Activated CD4-positive, alpha-beta T cell treated with anti-CD3 and anti-CD28 coated beads for 36 hours (primary cell): ENCODE measurements at regions of chr17 and their contacts with region 1.

Region 1: DNA sequence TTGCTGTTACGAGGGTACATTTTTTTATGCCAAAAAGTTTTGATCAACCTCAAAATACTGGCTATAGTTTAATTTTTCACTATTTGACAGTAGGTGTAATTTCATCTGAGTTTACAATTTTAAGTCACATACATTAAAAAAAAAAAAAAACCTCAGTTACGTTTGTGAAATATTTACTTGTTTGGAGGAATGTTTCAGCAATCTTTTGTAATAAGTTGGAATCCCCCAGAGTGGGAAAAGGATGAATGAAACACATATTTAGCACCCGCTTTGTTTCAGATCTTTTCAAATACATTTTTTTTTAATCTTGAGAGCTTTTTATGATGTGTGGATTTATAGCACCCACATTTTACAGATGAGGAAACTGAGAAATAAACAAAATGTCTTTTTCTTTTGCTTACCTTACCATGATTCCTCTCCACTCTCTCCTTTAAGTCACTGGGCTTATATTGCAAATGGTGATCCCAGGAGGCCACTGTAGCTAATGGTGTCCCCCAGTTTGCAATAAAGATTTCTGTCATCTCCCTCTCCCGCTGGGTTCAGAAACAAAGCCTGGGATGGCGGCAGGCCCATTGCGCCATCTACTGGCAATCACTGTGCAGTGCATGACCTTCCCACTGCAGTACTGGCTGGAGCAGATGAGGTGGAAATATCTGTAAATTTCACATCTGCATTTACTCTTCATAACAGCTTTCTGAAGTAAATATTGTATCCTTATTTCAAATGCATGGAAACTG is 27.7 kb downstream of the TBC1D3B start:
- DNase-seq: peak; percentile 80
- ATAC-seq: peak; percentile 87
- H3K4me3 Mint-ChIP-seq: no peak overlapping the region
- H3K27ac Mint-ChIP-seq: no peak overlapping the region
- H3K4me1 Mint-ChIP-seq: peaks cover 3% of the 10 kb centered on the region
- H3K27me3 Mint-ChIP-seq: peaks cover 15% of the 10 kb centered on the region

Region 2: DNA sequence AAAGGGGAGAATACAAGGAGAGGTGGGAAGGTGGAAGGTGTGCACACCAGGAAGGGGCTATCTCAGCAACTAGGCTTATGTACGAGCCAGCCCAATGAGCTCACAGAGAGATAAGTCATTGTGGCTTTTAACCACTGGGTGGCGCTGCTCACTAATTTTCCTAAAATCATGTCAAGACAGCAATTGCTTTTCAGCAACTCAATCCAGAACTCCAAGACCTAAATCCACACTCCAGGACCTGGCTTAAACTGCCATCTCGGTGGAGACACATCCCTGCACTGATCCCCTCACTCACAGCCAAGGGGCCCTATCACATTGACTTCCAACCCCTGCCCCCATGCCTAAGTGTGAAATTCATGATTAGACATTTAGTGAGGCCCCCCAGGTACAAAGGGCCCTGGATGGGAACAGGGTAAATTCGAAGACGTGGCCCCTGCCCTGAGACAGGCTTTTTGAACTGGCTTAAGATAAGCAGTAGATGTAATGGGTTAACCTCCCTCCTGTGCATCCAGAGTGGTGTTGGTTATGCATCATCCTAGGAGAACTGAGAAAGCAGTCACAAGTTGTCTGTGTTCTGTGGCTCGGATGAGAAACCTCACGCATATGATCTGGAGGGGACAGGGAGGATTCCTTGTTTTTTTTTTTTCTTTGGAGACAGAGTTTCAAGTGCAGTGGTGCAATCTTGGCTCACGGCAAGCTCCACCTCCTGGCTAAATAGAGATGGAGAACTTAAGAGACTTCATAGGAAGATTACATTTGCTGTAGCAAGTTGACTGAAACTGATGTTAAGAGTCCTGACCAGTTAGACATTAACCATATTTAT is 179.0 kb before region 1 on chr17:
- CTCF ChIA-PET with region 1: interaction called, 173 read pairs
- POLR2A ChIA-PET with region 1: interaction called, 3 read pairs
- intact Hi-C with region 1: loop called (anchors 1 to 2 kb)
- DNase-seq: peak; percentile 86
- ATAC-seq: peak; percentile 79
- H3K4me3 Mint-ChIP-seq: no peak overlapping the region
- H3K27ac Mint-ChIP-seq: no peak overlapping the region
- H3K4me1 Mint-ChIP-seq: no peaks in the 10 kb centered on the region
- H3K27me3 Mint-ChIP-seq: no peaks in the 10 kb centered on the region

Region 3: GRCh38 chr17:35981908-35982330 is 166.8 kb before region 1 on chr17:
- CTCF ChIA-PET with region 1: interaction called, 18 read pairs
- POLR2A ChIA-PET with region 1: no interaction called
- intact Hi-C with region 1: no loop called
- DNase-seq: peak; percentile 17
- ATAC-seq: no peak
- H3K4me3 Mint-ChIP-seq: no peak overlapping the region
- H3K27ac Mint-ChIP-seq: no peak overlapping the region
- H3K4me1 Mint-ChIP-seq: no peaks in the 10 kb centered on the region
- H3K27me3 Mint-ChIP-seq: peaks cover 8% of the 10 kb centered on the region

Region 4: DNA sequence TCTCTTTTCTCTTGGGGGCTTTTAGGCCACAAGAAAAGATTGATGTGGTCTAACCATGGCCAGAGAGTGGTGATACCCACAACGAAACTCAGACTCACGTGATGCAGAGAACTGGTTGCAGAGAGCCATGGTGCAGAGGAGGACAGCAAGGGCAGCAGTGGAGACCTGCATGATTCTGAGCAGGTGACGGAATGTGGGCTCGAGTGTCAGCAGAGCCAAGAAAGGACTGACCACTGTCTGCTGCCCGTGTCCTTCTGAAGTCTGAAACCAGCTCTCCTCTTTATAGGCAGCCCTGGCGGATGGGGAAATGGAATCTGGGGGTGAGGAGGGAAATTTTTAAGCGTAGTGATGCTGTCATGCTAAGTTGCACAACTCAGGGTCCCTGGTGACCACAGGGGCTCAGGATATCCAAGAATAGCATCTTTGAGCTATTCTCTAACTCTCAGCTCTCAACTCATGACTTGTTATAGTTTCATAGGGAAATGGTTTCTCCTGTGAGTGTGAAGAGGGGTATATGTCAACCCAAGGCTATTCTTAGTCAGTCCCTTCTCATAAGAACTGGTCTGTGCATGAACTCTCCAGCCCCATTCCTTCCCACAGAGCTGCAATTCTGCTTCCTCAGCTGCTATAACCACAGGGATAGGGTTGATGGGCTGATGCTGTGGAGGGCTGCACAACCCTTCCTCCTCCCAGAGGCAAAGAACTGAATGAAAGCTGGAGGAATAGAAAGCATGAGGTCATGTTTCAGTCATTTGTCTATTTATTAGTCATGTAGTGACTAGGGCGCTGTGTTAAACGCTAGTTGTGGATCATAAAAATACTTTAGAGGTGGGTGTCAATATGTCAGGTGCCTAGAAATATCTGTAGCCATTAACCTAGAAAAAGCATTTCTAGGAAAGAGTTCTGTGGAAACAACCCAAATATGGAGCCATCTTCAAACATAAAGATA is 58.6 kb before region 1 on chr17 and contains the start of gene CCL3:
- CTCF ChIA-PET with region 1: no interaction called
- POLR2A ChIA-PET with region 1: no interaction called
- intact Hi-C with region 1: loop called in 1 of 2 experiments (anchors 5 kb)
- DNase-seq: peak; percentile 67
- ATAC-seq: peak; percentile 75
- H3K4me3 Mint-ChIP-seq: peak within 1 kb of the TSS; percentile 50
- H3K27ac Mint-ChIP-seq: peak within 1 kb of the TSS; percentile 62
- H3K4me1 Mint-ChIP-seq: peaks cover 45% of the 10 kb centered on the region
- H3K27me3 Mint-ChIP-seq: peaks cover 22% of the 10 kb centered on the region
- total RNA-seq, gene CCL3: 287 to 296 TPM

Region 5: GRCh38 chr17:36198831-36199465 is 50.2 kb after region 1 on chr17:
- CTCF ChIA-PET with region 1: interaction called, 3 read pairs
- POLR2A ChIA-PET with region 1: no interaction called
- intact Hi-C with region 1: loop called in 1 of 2 experiments (anchors 10 kb)
- DNase-seq: peak; percentile 42
- ATAC-seq: peak; percentile 92
- H3K4me3 Mint-ChIP-seq: no peak overlapping the region
- H3K27ac Mint-ChIP-seq: no peak overlapping the region
- H3K4me1 Mint-ChIP-seq: peaks cover 14% of the 10 kb centered on the region
- H3K27me3 Mint-ChIP-seq: peaks cover 17% of the 10 kb centered on the region

Region 6: GRCh38 chr17:36474571-36474970 is 325.8 kb after region 1 on chr17:
- CTCF ChIA-PET with region 1: no interaction called
- POLR2A ChIA-PET with region 1: no interaction called
- intact Hi-C with region 1: no loop called
- DNase-seq: no peak
- ATAC-seq: no peak
- H3K4me3 Mint-ChIP-seq: no peak overlapping the region
- H3K27ac Mint-ChIP-seq: no peak overlapping the region
- H3K4me1 Mint-ChIP-seq: no peaks in the 10 kb centered on the region
- H3K27me3 Mint-ChIP-seq: peaks cover 12% of the 10 kb centered on the region

Region 7: GRCh38 chr17:36515837-36516236 is 367.1 kb after region 1 on chr17:
- CTCF ChIA-PET with region 1: no interaction called
- POLR2A ChIA-PET with region 1: no interaction called
- intact Hi-C with region 1: no loop called
- DNase-seq: no peak
- ATAC-seq: no peak
- H3K4me3 Mint-ChIP-seq: no peak overlapping the region
- H3K27ac Mint-ChIP-seq: no peak overlapping the region
- H3K4me1 Mint-ChIP-seq: no peaks in the 10 kb centered on the region
- H3K27me3 Mint-ChIP-seq: no peaks in the 10 kb centered on the region